ENCODE measurements at regions of chrX and their contacts with region 1.

Region 1: GRCh38 chrX:24081661-24082264 is 27.0 kb downstream of the EIF2S3 start:
- DNase-seq: peak; percentile 30
- H3K4me3 ChIP-seq: no peak overlapping the region
- H3K27ac ChIP-seq: no peak overlapping the region
- H3K4me1 ChIP-seq: no peaks in the 10 kb centered on the region
- H3K27me3 ChIP-seq: no peaks in the 10 kb centered on the region
- CTCF ChIP-seq: peak; percentile 52

Region 2: DNA sequence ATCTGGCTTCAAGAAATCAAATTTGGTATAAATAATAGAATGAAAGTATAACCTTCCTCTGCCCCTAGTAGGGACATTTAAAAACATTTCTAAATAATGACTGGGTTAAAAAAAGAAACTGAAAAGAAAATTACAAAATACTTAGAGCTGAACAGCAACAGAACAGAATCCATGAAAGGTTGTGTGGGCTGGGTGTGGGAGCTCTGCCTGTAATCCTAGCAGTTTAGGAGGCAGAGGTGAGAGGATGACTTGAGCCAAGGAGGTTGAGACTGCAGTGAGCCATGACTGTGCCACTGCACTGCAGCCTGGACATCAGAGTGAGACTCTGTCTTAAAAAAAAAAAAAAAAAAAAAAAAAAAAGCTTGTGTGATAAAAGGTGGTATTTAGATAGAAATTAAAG is 55.4 kb after region 1 on chrX:
- intact Hi-C with region 1: no loop called
- DNase-seq: no peak
- H3K4me3 ChIP-seq: no peak overlapping the region
- H3K27ac ChIP-seq: no peak overlapping the region
- H3K4me1 ChIP-seq: no peaks in the 10 kb centered on the region
- H3K27me3 ChIP-seq: no peaks in the 10 kb centered on the region
- CTCF ChIP-seq: no peak

Region 3: DNA sequence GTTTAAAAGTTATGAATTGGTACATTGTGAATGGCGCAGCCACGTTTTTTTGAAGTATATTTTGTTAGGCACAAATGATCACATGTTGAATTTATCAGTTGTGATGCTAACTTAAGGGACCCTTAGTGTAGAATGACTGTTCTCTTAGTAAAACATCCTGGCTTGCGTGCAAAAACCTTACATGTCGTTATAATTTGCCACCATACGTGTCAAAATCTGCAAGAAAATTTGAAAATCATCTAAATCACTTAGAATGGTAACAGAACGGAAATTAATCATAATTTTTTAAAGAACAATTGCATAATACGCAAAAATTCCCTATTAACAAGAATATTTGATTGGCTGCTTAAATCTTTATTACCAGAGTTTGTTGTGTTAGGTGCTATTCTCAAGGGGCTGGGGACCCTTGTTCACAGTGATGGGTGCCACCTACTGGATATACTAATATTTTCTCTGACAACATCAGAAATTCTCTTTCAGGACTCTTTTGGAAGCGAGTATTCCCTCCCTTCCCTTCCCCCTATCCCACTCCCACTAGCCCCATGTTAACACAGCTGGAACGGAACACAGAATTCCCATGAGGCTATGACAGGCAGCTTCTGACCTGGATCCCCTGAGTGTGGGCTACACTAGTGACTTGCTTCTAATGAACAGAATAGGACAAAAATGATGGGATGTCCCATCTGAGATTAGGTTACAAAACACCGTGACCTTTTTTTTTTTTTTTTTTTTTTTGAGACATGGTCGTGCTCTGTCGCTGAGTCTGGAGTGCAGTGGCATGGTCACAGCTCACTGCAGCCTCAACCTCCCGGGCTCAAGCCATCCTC is 160.3 kb after region 1 on chrX:
- intact Hi-C with region 1: loop called (anchors 10 kb)
- DNase-seq: no peak
- H3K4me3 ChIP-seq: no peak overlapping the region
- H3K27ac ChIP-seq: peak overlapping the region; percentile 55
- H3K4me1 ChIP-seq: no peaks in the 10 kb centered on the region
- H3K27me3 ChIP-seq: no peaks in the 10 kb centered on the region
- CTCF ChIP-seq: peak; percentile 57

Measured in left ventricle myocardium inferior (tissue), 1 donor.